ENCODE measurements at regions of chr2 and their contacts with region 1.

Region 1: GRCh38 chr2:25606892-25607291 is 66.5 kb downstream of the DTNB start:
- DNase-seq: no peak
- ATAC-seq: peak; percentile 58
- H3K4me3 Mint-ChIP-seq: no peak overlapping the region
- H3K27ac Mint-ChIP-seq: no peak overlapping the region
- H3K4me1 Mint-ChIP-seq: peaks cover 5% of the 10 kb centered on the region
- H3K27me3 Mint-ChIP-seq: no peaks in the 10 kb centered on the region

Region 2: DNA sequence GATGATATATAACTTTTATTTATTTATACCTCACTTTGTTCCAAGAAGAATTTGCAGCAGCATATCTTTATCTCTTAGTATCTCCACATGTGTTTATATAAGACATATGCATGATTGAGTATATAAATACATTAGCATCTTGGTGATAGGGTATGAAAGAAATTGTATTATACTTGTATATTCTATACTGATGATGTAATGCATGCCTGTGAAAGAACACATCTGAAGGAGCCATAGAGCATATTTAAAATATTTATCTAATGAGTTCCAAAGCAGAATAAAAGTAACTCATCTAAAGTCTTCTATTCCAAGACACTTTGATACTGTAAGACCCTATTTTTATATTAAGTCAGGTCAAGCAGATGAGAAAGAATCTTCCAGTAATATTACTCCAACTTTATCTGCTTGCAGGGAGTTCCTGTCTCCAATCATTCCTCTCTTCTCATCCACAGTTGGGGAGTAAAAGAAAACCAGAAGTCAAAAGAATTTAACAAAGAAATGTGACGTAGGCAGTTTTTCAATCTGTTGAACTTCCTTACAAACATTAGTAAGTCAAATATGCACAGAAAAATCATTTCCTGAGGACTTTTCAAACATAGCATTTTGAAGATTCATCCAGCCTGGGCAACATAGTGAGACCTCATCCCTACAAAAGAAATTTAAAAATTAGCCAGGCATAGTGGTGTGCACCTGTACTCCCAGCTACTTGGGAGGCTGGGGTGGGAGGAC is 10.2 kb before region 1 on chr2:
- CTCF ChIA-PET with region 1: interaction called, 16 read pairs
- POLR2A ChIA-PET with region 1: no interaction called
- intact Hi-C with region 1: no loop called
- DNase-seq: no peak
- ATAC-seq: no peak
- H3K4me3 Mint-ChIP-seq: no peak overlapping the region
- H3K27ac Mint-ChIP-seq: no peak overlapping the region
- H3K4me1 Mint-ChIP-seq: peaks cover 25% of the 10 kb centered on the region
- H3K27me3 Mint-ChIP-seq: no peaks in the 10 kb centered on the region

Region 3: DNA sequence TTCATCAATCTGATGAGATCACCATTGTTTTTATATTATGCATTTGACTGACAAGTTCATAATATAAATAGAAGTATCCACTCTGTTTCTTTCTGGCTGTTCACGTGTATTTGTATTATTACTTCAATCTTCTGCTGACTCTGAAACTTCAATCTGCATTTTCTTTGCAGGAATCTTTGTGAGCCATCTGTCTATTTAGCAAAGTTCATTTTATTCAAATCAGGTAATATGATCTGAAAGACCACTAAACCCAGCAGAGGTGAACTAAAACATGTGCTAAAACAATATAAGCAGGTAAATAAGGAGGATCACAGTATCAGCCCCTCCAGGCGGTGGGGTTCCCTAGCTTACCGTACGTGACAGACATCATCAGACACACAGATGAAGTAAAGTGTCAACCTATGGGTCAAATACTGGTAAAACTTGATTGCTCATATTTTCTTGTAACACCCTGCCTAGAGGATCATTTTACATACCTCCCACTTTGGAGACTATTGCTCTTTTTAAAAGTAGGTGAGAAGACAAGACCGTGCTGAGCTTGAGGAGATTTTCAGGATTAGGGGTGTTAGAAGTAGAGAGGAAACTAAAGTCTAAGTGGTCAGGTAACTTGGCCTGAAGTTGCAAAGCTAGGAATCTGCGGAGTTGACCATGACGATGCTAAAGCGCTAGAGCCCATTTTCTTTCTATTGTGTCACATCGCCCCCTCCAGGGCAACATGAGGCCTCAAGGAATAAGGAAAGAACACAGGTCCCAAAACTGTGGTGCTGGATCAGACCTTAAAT is 57.5 kb after region 1 on chr2:
- CTCF ChIA-PET with region 1: interaction called, 25 read pairs
- POLR2A ChIA-PET with region 1: no interaction called
- intact Hi-C with region 1: loop called (anchors 1 to 2 kb)
- DNase-seq: peak; percentile 56
- ATAC-seq: peak; percentile 49
- H3K4me3 Mint-ChIP-seq: no peak overlapping the region
- H3K27ac Mint-ChIP-seq: no peak overlapping the region
- H3K4me1 Mint-ChIP-seq: peaks cover 22% of the 10 kb centered on the region
- H3K27me3 Mint-ChIP-seq: no peaks in the 10 kb centered on the region

Region 4: DNA sequence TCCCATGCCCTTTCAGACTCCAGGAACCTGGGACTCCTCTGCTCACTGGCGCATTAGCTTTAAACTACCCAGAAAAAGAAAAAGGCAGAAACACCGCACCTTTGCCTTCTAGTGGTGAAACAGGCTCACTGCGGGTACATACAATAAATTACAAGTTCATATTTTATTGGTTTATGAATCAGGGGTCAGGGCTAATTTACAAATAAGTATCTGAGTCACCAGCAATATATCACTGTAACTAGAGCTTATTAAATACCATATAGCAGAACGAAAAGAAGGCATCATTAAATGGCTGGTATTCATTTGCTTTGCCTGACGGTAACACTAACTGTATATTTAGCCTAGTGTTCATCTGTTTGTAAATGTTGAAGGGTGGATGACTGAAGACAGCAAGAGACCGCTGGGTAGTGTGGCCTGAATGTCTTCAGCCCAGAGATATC is 93.3 kb after region 1 on chr2:
- CTCF ChIA-PET with region 1: interaction called, 92 read pairs
- POLR2A ChIA-PET with region 1: no interaction called
- intact Hi-C with region 1: loop called (anchors 1 kb)
- DNase-seq: peak; percentile 47
- ATAC-seq: peak; percentile 53
- H3K4me3 Mint-ChIP-seq: no peak overlapping the region
- H3K27ac Mint-ChIP-seq: no peak overlapping the region
- H3K4me1 Mint-ChIP-seq: peaks cover 2% of the 10 kb centered on the region
- H3K27me3 Mint-ChIP-seq: no peaks in the 10 kb centered on the region

Region 5: DNA sequence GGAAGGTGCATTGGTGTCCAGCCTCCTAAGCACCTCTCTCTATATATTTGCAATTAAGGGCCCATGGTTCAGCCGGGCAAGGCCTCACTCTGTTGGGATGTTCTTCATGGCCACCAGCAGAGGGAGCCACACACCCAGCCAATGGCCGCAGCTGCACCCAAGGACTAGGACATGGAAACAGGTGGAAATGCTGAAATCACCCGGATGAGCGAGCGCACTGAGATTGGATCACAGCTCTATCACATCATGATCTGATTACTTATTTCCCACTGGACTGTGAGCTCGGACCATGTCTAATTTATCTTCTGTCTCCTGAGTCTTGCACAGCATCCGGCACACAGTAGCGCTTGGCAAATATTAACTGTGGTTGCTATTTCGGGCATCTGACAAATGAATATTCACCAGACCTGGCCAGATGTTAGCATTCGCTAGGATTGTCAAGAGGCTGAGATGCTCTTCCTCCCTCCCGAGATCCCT is 344.2 kb after region 1 on chr2:
- CTCF ChIA-PET with region 1: interaction called, 11 read pairs
- POLR2A ChIA-PET with region 1: no interaction called
- intact Hi-C with region 1: loop called in 1 of 2 experiments (anchors 10 kb)
- DNase-seq: peak; percentile 87
- ATAC-seq: peak; percentile 98
- H3K4me3 Mint-ChIP-seq: no peak overlapping the region
- H3K27ac Mint-ChIP-seq: no peak overlapping the region
- H3K4me1 Mint-ChIP-seq: no peaks in the 10 kb centered on the region
- H3K27me3 Mint-ChIP-seq: no peaks in the 10 kb centered on the region